ENCODE measurements at regions of chr6 and their contacts with region 1.

Region 1: DNA sequence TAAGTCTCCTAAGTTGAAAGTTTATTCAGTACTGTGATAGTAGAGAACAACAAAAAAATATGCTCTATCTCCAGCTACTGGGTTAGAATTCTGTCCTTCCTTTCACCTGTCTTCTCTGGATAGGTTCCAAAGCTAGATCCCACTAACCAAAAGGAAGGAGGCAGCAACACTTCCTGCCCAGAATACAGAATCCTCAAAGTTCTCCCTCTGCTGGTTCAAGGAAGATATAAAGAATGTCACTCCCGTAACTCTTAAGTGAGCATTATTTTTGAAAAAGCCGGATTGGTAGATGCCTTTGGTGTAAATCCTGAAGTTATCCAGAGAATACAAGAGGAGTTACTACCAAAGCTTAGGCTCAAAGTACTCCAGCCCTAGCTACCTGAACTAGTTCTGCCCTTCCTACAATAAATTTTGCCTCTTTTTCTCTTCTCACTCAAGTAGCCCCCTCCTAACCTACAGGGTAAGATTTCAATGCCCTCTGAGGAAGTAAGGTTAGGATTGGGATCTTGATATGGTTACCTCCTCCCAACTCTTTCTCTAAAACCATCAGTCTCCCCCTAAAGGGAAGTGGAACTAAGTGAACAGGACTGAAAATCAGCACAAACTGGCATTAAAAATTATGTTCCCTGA is 26.0 kb upstream of the CRIP3 start:
- DNase-seq: peak; percentile 17 to 51 (median 38)
- H3K4me3 ChIP-seq: no peak overlapping the region
- H3K4me3 Mint-ChIP-seq: no peak overlapping the region
- H3K27ac ChIP-seq: no peak overlapping the region
- H3K27ac Mint-ChIP-seq: peak overlapping the region in 2 of 7 donors; percentile 53 to 71
- H3K4me1 ChIP-seq: peaks cover 42 to 43% of the 10 kb centered on the region in 2 donors
- H3K4me1 Mint-ChIP-seq: peaks cover 39% of the 10 kb centered on the region
- H3K27me3 ChIP-seq: no peaks in the 10 kb centered on the region
- H3K27me3 Mint-ChIP-seq: no peaks in the 10 kb centered on the region
- CTCF ChIP-seq: peak; percentile 65

Region 2: GRCh38 chr6:43263314-43264178 is 71.0 kb before region 1 on chr6:
- intact Hi-C with region 1: loop called (anchors 1 to 5 kb)
- DNase-seq: peak; percentile 57 to 74 (median 72)
- H3K4me3 ChIP-seq: no peak overlapping the region
- H3K4me3 Mint-ChIP-seq: peak overlapping the region in 1 of 2 donors; percentile 39
- H3K27ac ChIP-seq: no peak overlapping the region
- H3K27ac Mint-ChIP-seq: peak overlapping the region in 2 of 7 donors; percentile 32 to 79
- H3K4me1 ChIP-seq: no peaks in the 10 kb centered on the region
- H3K4me1 Mint-ChIP-seq: peaks cover 4% of the 10 kb centered on the region
- H3K27me3 ChIP-seq: peaks cover 2 to 11% of the 10 kb centered on the region in 2 donors
- H3K27me3 Mint-ChIP-seq: peaks cover 16 to 26% (median 17%) of the 10 kb centered on the region in 3 donors
- CTCF ChIP-seq: peak; percentile 82

Measured in CD14-positive monocyte (primary cell).